ENCODE measurements at regions of chr10 and their contacts with region 1.

Region 1: DNA sequence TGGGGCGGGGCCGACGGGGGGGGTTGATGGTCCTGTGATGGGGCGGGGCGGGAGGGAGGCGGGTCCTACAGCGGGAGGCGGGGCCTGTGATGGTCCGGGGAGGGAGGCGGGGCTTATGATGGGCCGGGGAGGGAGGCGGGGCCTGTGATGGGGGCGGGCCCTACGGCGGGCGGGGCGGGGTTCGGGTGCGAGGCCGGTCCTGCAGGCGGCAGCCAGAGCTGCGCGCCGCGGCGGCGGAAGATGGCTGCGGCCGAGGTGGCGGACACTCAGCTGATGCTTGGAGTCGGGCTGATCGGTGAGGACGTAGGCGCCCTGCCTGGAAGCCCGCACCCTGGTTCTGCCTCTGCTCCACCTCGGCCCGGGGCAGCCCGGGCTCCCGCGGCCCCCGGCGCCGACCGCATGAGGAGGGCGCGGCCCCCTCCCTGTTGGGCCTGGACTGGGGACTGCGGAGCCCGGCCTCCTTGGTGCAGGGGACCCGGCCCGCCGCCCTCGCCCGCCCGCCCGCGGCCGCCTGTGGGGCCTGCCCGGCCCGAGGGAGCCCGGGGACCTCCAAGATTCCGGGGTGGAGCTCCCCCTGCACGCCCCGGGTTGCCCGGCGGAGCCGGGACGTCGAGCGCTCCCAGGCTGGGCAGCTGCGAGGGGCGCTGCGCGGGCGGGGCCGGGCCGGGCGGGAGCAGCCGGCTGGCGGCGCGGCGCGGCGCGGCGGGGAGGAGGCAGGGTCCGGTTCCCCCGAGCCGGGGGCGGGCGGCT is at the start of gene DENND10:
- DNase-seq: peak; percentile 94
- H3K4me3 ChIP-seq: peak within 1 kb of the TSS; percentile 58 to 95 (median 90)
- H3K27ac ChIP-seq: peak within 1 kb of the TSS; percentile 76 to 94 (median 88)
- H3K4me1 ChIP-seq: peaks cover 0 to 18% (median 14%) of the 10 kb centered on the region in 4 donors
- H3K27me3 ChIP-seq: no peaks in the 10 kb centered on the region
- CTCF ChIP-seq: no peak
- EP300 ChIP-seq: no peak
- POLR2A ChIP-seq: peak; percentile 68 to 81
- total RNA-seq, gene DENND10: 35.0 to 51.3 (median 39.3) TPM

Region 2: GRCh38 chr10:119161680-119162079 is 57.6 kb after region 1 on chr10:
- intact Hi-C with region 1: loop called (anchors 5 kb)
- DNase-seq: peak; percentile 33
- H3K4me3 ChIP-seq: no peak overlapping the region
- H3K27ac ChIP-seq: peak overlapping the region; percentile 6 to 27 (median 18)
- H3K4me1 ChIP-seq: peaks cover 0 to 29% (median 19%) of the 10 kb centered on the region in 4 donors
- H3K27me3 ChIP-seq: no peaks in the 10 kb centered on the region
- CTCF ChIP-seq: peak in 3 of 4 experiments; percentile 10 to 27 (median 11)
- EP300 ChIP-seq: no peak
- POLR2A ChIP-seq: no peak

Measured in sigmoid colon (tissue), 7 donors.